Caco-2 (cell line): ENCODE measurements at regions of chr11 and their contacts with region 1.

Region 1: DNA sequence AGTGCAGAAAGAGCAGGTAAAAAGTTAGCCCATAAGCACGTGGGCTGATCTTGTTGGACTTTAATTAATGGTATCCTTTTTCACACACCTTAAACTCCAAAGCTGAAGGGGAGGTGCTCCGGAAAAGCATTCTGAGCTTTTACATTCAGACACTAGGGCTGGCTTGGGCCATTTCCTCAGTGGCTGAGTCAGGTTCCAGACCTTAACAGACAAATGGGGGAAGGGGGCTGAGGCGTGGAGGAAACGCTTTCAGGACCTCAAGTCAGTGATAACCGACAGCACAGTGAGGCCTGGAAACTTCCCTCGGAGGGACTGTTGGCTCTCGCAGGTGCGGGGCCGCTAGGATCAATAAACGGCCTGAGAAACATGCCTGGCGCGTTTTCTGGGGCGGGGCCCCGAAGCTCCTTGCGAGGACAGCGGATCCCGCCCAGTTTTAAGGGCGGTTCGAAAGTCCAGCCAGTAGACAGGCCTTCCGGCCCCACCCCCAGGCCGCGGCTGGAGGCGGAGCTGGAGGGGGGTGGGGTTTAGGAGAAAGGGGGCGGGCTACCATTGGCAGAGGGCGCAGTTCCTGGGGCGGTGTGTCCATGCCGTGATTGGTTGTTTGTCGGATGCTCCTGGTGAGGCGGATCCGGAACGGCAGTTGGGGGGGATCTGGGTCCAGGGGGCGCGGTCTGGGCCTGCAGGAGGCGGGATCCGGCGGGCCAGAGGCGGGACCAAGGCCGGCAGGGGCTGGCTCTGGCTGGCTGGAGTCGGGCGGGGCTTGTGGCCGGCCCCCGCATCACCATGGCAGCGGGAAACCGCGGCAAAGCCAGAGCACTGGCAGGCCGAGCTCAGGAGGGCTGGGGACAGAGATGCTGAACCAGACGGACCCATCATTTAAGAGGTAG is 8.0 kb downstream of the C11orf52 start:
- DNase-seq: peak; percentile 99 to 100
- H3K4me3 ChIP-seq: peak overlapping the region; percentile 30
- H3K4me3 Mint-ChIP-seq: peak overlapping the region; percentile 78
- H3K27ac Mint-ChIP-seq: peak overlapping the region; percentile 96
- H3K4me1 ChIP-seq: peaks cover 21% of the 10 kb centered on the region
- H3K4me1 Mint-ChIP-seq: peaks cover 39% of the 10 kb centered on the region
- H3K27me3 ChIP-seq: no peaks in the 10 kb centered on the region
- H3K27me3 Mint-ChIP-seq: no peaks in the 10 kb centered on the region
- CTCF ChIP-seq: no peak

Region 2: DNA sequence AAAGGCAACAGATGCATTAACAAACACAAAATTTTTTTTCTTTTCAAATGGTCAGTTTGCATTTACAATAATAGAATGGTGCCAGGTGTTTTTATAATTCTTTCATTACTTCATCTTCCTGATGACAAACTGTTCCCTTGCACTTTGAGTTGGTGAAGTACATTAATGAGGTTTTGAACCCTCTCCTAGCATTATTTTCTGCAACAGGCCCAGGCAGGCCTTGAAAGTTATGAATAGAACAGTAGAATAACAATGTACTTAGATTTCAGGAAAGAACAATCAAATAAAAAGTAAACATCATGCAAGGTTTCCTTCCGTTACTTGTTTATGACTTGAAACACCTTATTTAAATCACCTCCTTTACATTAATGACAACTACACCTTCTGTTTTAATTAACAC is 424.1 kb before region 1 on chr11:
- CTCF ChIA-PET with region 1: no interaction called
- POLR2A ChIA-PET with region 1: no interaction called
- intact Hi-C with region 1: no loop called
- DNase-seq: no peak
- H3K4me3 ChIP-seq: no peak overlapping the region
- H3K4me3 Mint-ChIP-seq: no peak overlapping the region
- H3K27ac Mint-ChIP-seq: no peak overlapping the region
- H3K4me1 ChIP-seq: no peaks in the 10 kb centered on the region
- H3K4me1 Mint-ChIP-seq: no peaks in the 10 kb centered on the region
- H3K27me3 ChIP-seq: no peaks in the 10 kb centered on the region
- H3K27me3 Mint-ChIP-seq: peaks cover 20% of the 10 kb centered on the region
- CTCF ChIP-seq: no peak

Region 3: DNA sequence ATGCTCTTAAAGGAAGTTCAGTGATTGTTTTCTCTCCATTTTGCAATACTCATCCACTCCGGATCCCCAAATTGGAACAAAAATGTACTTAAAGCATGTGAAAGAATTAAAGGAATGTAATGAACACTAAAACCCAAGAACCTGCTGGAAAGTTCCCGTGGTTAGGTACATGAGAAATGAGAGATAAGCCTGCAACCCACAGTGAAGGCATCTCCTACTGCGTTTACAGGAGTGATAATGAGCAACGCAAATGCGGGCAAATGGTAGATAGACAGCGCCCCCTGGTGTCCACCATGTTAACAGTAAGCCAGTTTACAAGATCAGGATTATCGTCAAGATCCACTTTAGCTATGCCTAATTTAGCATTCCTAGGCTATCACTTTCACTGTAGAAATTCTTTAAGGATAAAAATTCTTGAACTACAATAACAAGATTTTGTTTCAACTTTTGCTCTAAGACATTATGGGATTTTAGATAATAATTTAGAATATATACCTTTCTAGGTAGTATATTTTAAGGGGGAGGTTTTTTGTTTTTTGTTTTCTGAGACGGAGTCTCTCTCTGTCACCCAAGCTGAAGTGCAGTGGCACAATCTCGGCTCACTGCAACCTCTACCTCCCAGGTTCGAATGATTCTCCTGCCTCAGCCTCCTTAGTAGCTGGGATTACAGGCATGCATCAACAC is 85.2 kb before region 1 on chr11:
- CTCF ChIA-PET with region 1: no interaction called
- POLR2A ChIA-PET with region 1: no interaction called
- intact Hi-C with region 1: no loop called
- DNase-seq: peak; percentile 91 to 94
- H3K4me3 ChIP-seq: no peak overlapping the region
- H3K4me3 Mint-ChIP-seq: no peak overlapping the region
- H3K27ac Mint-ChIP-seq: no peak overlapping the region
- H3K4me1 ChIP-seq: peaks cover 19% of the 10 kb centered on the region
- H3K4me1 Mint-ChIP-seq: peaks cover 20% of the 10 kb centered on the region
- H3K27me3 ChIP-seq: no peaks in the 10 kb centered on the region
- H3K27me3 Mint-ChIP-seq: no peaks in the 10 kb centered on the region
- CTCF ChIP-seq: peak; percentile 96 to 98

Region 4: GRCh38 chr11:111878849-111879636 is 47.7 kb before region 1 on chr11 and contains the starts of genes CFAP68 and FDXACB1:
- CTCF ChIA-PET with region 1: interaction called, 8 read pairs
- POLR2A ChIA-PET with region 1: interaction called, 3 read pairs
- intact Hi-C with region 1: loop called (anchors 1 kb)
- DNase-seq: peak; percentile 100
- H3K4me3 ChIP-seq: peak within 1 kb of the TSS; percentile 51
- H3K4me3 Mint-ChIP-seq: peak within 1 kb of the TSS; percentile 86
- H3K27ac Mint-ChIP-seq: peak within 1 kb of the TSS; percentile 97
- H3K4me1 ChIP-seq: peaks cover 6% of the 10 kb centered on the region; the same call in 1 of the 2 replicates
- H3K4me1 Mint-ChIP-seq: peaks cover 8% of the 10 kb centered on the region
- H3K27me3 ChIP-seq: no peaks in the 10 kb centered on the region
- H3K27me3 Mint-ChIP-seq: no peaks in the 10 kb centered on the region
- CTCF ChIP-seq: peak; percentile 99
- total RNA-seq, gene CFAP68: 69.8 and 71.4 TPM in 2 replicates
- total RNA-seq, gene FDXACB1: 4.3 and 4.7 TPM in 2 replicates

Region 5: DNA sequence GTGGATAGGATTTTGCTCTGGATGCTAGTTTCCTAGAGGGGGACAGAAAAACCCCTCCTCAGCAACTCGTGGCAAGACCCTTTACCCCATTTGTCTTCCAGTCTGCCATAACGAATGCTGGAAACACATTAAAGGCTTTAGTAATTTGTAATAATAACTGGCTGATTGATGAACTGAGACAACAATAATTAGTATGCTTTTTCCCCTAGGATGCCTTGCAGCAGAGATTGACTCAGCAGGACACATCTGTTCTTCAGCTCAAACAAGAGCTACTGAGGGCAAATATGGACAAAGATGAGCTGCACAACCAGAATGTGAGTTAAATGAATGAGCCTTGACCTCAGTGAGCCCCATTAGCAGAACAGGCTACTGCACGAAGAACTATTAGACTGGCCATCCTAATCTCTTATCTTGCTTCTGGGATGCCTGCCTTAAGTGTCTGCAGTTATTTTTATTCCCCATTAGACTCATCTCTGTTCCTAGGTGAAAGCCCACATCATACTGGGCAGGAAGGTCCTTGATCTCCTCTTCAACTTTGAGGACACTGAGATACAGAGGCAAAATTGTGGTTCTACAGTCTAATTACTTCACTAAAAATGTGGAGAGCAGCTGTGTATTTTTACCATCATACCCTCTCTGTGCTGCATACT is 65.6 kb after region 1 on chr11:
- CTCF ChIA-PET with region 1: interaction called, 10 read pairs
- POLR2A ChIA-PET with region 1: no interaction called
- intact Hi-C with region 1: loop called (anchors 1 kb)
- DNase-seq: no peak
- H3K4me3 ChIP-seq: no peak overlapping the region
- H3K4me3 Mint-ChIP-seq: no peak overlapping the region
- H3K27ac Mint-ChIP-seq: no peak overlapping the region
- H3K4me1 ChIP-seq: peaks cover 14% of the 10 kb centered on the region
- H3K4me1 Mint-ChIP-seq: peaks cover 8% of the 10 kb centered on the region
- H3K27me3 ChIP-seq: no peaks in the 10 kb centered on the region
- H3K27me3 Mint-ChIP-seq: no peaks in the 10 kb centered on the region
- CTCF ChIP-seq: no peak

Region 6: GRCh38 chr11:112024773-112025678 is 98.3 kb after region 1 on chr11 and contains the start of gene DLAT:
- CTCF ChIA-PET with region 1: interaction called, 16 read pairs
- POLR2A ChIA-PET with region 1: interaction called, 13 read pairs
- intact Hi-C with region 1: loop called (anchors 1 kb)
- DNase-seq: peak; percentile 97 to 99
- H3K4me3 ChIP-seq: peak within 1 kb of the TSS; percentile 79
- H3K4me3 Mint-ChIP-seq: peak within 1 kb of the TSS; percentile 94
- H3K27ac Mint-ChIP-seq: peak within 1 kb of the TSS; percentile 98
- H3K4me1 ChIP-seq: no peaks in the 10 kb centered on the region; the same call in 1 of the 2 replicates
- H3K4me1 Mint-ChIP-seq: peaks cover 17% of the 10 kb centered on the region
- H3K27me3 ChIP-seq: no peaks in the 10 kb centered on the region
- H3K27me3 Mint-ChIP-seq: no peaks in the 10 kb centered on the region
- CTCF ChIP-seq: no peak
- total RNA-seq, gene DLAT: 99.3 and 100.0 TPM in 2 replicates

Region 7: GRCh38 chr11:112086422-112087191 is 159.9 kb after region 1 on chr11 and contains the starts of genes SDHD and TIMM8B:
- CTCF ChIA-PET with region 1: interaction called, 4 read pairs
- POLR2A ChIA-PET with region 1: interaction called, 10 read pairs
- intact Hi-C with region 1: loop called (anchors 2 kb)
- DNase-seq: peak; percentile 99
- H3K4me3 ChIP-seq: peak within 1 kb of the TSS; percentile 59
- H3K4me3 Mint-ChIP-seq: peak within 1 kb of the TSS; percentile 95
- H3K27ac Mint-ChIP-seq: peak within 1 kb of the TSS; percentile 98
- H3K4me1 ChIP-seq: peaks cover 4% of the 10 kb centered on the region; the same call in 1 of the 2 replicates
- H3K4me1 Mint-ChIP-seq: peaks cover 17% of the 10 kb centered on the region
- H3K27me3 ChIP-seq: no peaks in the 10 kb centered on the region
- H3K27me3 Mint-ChIP-seq: no peaks in the 10 kb centered on the region
- CTCF ChIP-seq: peak in 1 of 2 experiments; percentile 73
- total RNA-seq, gene SDHD: 157 and 166 TPM in 2 replicates
- total RNA-seq, gene TIMM8B: 147 and 154 TPM in 2 replicates